CD4-positive, alpha-beta T cell (primary cell): ENCODE measurements at regions of chr13 and their contacts with region 1.

Region 1: DNA sequence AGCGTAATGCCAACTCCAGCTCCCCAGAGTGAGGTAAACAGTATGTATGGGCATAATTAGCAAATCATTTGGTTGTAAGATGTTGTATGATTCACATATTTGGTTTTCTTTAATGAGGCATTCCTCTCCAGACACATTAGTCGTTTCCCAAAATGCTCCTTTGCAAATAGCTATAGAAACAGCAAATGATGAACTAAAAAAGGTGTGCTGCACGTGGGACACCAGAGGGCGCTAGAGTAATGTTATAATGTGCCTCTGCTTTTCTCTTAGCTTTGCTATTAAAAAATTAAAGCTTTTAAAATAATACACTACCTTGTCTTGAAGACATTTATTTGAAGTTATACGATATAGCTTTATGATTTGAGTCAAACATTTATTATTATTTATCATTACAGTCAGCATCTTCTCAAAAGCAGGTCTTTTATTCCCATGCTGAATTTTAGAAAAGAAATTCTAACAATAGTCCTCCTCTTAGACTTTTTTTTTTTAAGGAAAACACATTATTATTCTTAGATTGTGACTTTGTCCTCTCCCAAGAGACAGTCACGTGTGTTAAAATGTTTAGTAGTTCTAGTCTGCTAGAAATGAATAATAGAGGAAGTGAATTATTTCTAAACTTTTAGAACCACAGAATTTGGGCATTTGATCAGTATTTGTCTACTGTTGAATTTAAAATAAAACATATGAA is 121.6 kb upstream of the FRY start:
- DNase-seq: peak; percentile 8 to 83 (median 27)
- ATAC-seq: peak; percentile 46
- H3K4me3 ChIP-seq: no peak overlapping the region
- H3K4me3 Mint-ChIP-seq: no peak overlapping the region
- H3K27ac ChIP-seq: no peak overlapping the region
- H3K27ac Mint-ChIP-seq: no peak overlapping the region
- H3K4me1 ChIP-seq: peaks cover 10% of the 10 kb centered on the region
- H3K4me1 Mint-ChIP-seq: peaks cover 8% of the 10 kb centered on the region
- H3K27me3 ChIP-seq: no peaks in the 10 kb centered on the region
- H3K27me3 Mint-ChIP-seq: no peaks in the 10 kb centered on the region
- CTCF ChIP-seq: peak; percentile 92

Region 2: GRCh38 chr13:31930901-31931522 is 21.0 kb after region 1 on chr13:
- CTCF ChIA-PET with region 1: interaction called, 11 read pairs
- POLR2A ChIA-PET with region 1: interaction called, 3 read pairs
- intact Hi-C with region 1: no loop called
- DNase-seq: peak in 1 of 14 experiments; percentile 40
- ATAC-seq: peak; percentile 41
- H3K4me3 ChIP-seq: no peak overlapping the region
- H3K4me3 Mint-ChIP-seq: no peak overlapping the region
- H3K27ac ChIP-seq: no peak overlapping the region
- H3K27ac Mint-ChIP-seq: no peak overlapping the region
- H3K4me1 ChIP-seq: peaks cover 20% of the 10 kb centered on the region
- H3K4me1 Mint-ChIP-seq: peaks cover 6% of the 10 kb centered on the region
- H3K27me3 ChIP-seq: no peaks in the 10 kb centered on the region
- H3K27me3 Mint-ChIP-seq: no peaks in the 10 kb centered on the region
- CTCF ChIP-seq: no peak

Region 3: GRCh38 chr13:32310134-32310706 is 400.2 kb after region 1 on chr13:
- CTCF ChIA-PET with region 1: interaction called, 3 read pairs
- POLR2A ChIA-PET with region 1: interaction called, 6 read pairs
- intact Hi-C with region 1: loop called (anchors 1 to 2 kb)
- DNase-seq: peak in 5 of 14 experiments; percentile 1 to 69 (median 61)
- ATAC-seq: peak; percentile 59
- H3K4me3 ChIP-seq: peak overlapping the region; percentile 9
- H3K4me3 Mint-ChIP-seq: peak overlapping the region; percentile 13
- H3K27ac ChIP-seq: no peak overlapping the region
- H3K27ac Mint-ChIP-seq: no peak overlapping the region
- H3K4me1 ChIP-seq: peaks cover 12% of the 10 kb centered on the region
- H3K4me1 Mint-ChIP-seq: peaks cover 22% of the 10 kb centered on the region
- H3K27me3 ChIP-seq: no peaks in the 10 kb centered on the region
- H3K27me3 Mint-ChIP-seq: no peaks in the 10 kb centered on the region
- CTCF ChIP-seq: peak; percentile 72

Region 4: GRCh38 chr13:32581177-32581786 is 671.3 kb after region 1 on chr13:
- CTCF ChIA-PET with region 1: interaction called, 3 read pairs
- POLR2A ChIA-PET with region 1: interaction called, 3 read pairs
- intact Hi-C with region 1: loop called in 1 of 2 experiments (anchors 5 kb)
- DNase-seq: peak in 4 of 14 experiments; percentile 3 to 49 (median 39)
- ATAC-seq: no peak
- H3K4me3 ChIP-seq: no peak overlapping the region
- H3K4me3 Mint-ChIP-seq: no peak overlapping the region
- H3K27ac ChIP-seq: no peak overlapping the region
- H3K27ac Mint-ChIP-seq: no peak overlapping the region
- H3K4me1 ChIP-seq: peaks cover 7% of the 10 kb centered on the region
- H3K4me1 Mint-ChIP-seq: peaks cover 9% of the 10 kb centered on the region
- H3K27me3 ChIP-seq: no peaks in the 10 kb centered on the region
- H3K27me3 Mint-ChIP-seq: no peaks in the 10 kb centered on the region
- CTCF ChIP-seq: peak; percentile 74

Region 5: DNA sequence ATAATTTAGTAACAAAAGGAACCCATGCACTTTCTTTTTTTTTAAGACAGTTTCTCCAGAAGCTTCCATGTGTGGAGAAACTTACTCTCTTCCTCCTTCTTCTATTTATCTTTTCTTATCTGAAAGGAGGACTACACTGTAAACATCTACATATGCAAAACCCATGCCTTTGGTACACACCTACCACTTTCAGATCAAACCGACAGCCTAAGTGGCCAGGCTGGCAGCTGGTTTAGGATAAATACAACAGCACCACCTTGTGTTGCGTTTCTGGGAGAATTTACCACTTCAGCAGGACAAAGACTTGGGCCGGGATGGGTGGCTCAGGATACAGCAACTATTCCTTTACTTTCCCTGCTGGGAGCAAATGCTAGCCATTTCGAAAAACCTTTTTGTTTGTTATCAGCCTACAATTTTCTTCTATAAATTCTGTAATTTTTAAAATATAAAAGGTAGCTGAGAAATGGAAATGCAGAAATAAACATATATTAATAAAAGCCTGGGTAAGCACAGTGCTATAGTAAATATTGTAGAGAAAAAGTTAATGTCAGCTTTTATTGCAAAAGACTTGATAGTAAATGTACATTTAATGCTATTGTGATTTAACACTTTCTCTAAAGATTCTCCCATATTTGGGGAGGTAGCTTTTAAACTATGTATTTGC is 1813.9 kb after region 1 on chr13:
- CTCF ChIA-PET with region 1: no interaction called
- POLR2A ChIA-PET with region 1: no interaction called
- intact Hi-C with region 1: loop called in 1 of 2 experiments (anchors 5 kb)
- DNase-seq: peak; percentile 27 to 86 (median 50)
- ATAC-seq: peak; percentile 91
- H3K4me3 ChIP-seq: no peak overlapping the region
- H3K4me3 Mint-ChIP-seq: no peak overlapping the region
- H3K27ac ChIP-seq: no peak overlapping the region
- H3K27ac Mint-ChIP-seq: no peak overlapping the region
- H3K4me1 ChIP-seq: peaks cover 4% of the 10 kb centered on the region
- H3K4me1 Mint-ChIP-seq: peaks cover 27% of the 10 kb centered on the region
- H3K27me3 ChIP-seq: no peaks in the 10 kb centered on the region
- H3K27me3 Mint-ChIP-seq: no peaks in the 10 kb centered on the region
- CTCF ChIP-seq: peak; percentile 69